HepG2 (cell line): ENCODE measurements at regions of chr11 and their contacts with region 1.

Region 1: DNA sequence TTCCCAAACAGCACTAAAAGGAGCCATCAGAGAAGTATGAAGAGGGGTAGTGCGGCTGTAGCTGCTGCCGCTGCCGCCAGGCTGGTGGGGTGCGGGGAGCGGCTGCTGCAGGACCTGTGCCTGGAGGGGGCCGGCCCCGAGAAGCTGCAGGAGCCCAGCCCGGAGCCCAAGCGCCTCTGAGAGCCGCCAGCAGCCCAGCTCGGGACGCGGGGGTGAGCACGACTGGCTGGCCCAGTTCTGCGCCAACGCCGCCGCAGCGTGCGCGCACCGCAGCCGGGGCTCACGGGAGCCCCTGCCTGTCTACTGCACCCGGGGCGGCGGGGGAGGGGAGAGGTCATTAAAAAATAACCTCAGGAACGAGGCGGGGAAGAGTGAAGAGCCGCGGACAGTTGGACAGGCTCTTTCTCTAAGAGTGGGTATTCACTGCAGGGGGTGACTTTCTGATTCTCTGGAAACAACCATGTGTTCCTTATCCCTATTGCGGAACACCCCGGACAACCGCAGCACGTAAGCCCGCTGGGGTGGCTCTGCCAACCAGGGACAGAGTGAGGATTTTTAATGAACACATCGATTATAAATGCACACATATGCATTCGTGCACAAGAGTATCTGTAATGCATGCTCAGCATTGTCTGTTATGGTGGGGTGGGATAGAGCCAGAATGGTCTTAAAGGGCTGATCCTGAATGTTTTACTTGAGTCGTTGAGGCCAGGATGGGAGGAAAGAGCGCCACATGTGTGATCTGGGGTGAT is 453 bp downstream of the GAS2 start:
- DNase-seq: peak; percentile 53
- ATAC-seq: peak; percentile 98
- H3K4me3 ChIP-seq: peak overlapping the region; percentile 74 to 90 (median 86)
- H3K27ac ChIP-seq: peak overlapping the region; percentile 87
- H3K4me1 ChIP-seq: peaks cover 58% of the 10 kb centered on the region
- H3K27me3 ChIP-seq: no peaks in the 10 kb centered on the region; a peak in 1 of 5 replicates
- CTCF ChIP-seq: 0 out of 2 replicates have a peak, but pooled peaks have one; percentile 8
- EP300 ChIP-seq: no peak; a peak in 1 of 4 replicates
- POLR2A ChIP-seq: peak; percentile 62 to 64; a peak in 3 of 4 replicates
- RAD21 ChIP-seq: peak; percentile 59

Region 2: DNA sequence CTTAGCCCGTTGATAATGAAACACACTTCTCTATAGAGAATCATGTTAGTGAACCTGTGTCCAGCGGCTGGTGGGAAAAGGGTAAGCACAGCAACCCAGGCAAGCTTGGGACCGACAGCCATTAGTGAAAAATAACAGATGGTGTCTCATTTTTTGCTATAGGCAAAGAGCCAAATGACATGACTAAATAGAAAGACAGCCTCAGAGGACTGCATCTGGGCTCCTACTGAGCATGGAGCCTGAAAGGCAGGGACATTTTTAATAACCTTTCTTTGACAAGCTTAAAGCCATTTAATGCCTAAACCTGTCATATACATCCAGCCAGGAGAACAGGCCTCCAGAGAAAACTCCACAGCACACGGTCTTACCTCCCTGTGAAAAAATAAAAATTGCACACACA is 108.2 kb before region 1 on chr11:
- CTCF ChIA-PET with region 1: no interaction called
- POLR2A ChIA-PET with region 1: no interaction called
- in situ Hi-C with region 1: no loop called
- intact Hi-C with region 1: no loop called
- DNase-seq: no peak
- ATAC-seq: no peak
- H3K4me3 ChIP-seq: no peak overlapping the region
- H3K27ac ChIP-seq: no peak overlapping the region
- H3K4me1 ChIP-seq: no peaks in the 10 kb centered on the region
- H3K27me3 ChIP-seq: no peaks in the 10 kb centered on the region; a peak in 1 of 5 replicates
- CTCF ChIP-seq: no peak
- EP300 ChIP-seq: no peak
- POLR2A ChIP-seq: no peak
- RAD21 ChIP-seq: no peak

Region 3: DNA sequence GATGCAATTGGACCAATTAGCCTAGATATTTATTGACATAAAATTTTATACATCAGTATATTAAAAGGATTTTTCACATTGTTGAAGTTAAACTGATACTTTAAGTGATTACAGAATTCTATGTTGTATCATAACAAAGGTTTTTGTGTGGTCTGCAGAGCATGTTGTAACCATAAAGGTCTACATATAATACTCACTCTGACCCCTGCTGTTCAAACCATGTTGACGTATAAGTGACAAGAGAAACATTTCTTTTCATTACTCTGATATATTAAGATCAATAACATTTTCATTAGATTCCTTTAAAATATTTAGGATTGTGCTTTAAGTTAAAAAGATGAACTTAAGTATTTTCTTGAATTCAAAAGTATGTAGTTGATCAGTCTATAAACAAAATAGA is 63.5 kb after region 1 on chr11:
- CTCF ChIA-PET with region 1: interaction called, 26 read pairs
- POLR2A ChIA-PET with region 1: no interaction called
- in situ Hi-C with region 1: loop called (anchors 5 kb)
- intact Hi-C with region 1: loop called (anchors 1 kb)
- DNase-seq: peak; percentile 59
- ATAC-seq: peak; percentile 56
- H3K4me3 ChIP-seq: no peak overlapping the region
- H3K27ac ChIP-seq: no peak overlapping the region
- H3K4me1 ChIP-seq: peaks cover 10% of the 10 kb centered on the region
- H3K27me3 ChIP-seq: no peaks in the 10 kb centered on the region
- CTCF ChIP-seq: peak; percentile 35
- EP300 ChIP-seq: no peak
- POLR2A ChIP-seq: no peak
- RAD21 ChIP-seq: peak; percentile 48

Region 4: DNA sequence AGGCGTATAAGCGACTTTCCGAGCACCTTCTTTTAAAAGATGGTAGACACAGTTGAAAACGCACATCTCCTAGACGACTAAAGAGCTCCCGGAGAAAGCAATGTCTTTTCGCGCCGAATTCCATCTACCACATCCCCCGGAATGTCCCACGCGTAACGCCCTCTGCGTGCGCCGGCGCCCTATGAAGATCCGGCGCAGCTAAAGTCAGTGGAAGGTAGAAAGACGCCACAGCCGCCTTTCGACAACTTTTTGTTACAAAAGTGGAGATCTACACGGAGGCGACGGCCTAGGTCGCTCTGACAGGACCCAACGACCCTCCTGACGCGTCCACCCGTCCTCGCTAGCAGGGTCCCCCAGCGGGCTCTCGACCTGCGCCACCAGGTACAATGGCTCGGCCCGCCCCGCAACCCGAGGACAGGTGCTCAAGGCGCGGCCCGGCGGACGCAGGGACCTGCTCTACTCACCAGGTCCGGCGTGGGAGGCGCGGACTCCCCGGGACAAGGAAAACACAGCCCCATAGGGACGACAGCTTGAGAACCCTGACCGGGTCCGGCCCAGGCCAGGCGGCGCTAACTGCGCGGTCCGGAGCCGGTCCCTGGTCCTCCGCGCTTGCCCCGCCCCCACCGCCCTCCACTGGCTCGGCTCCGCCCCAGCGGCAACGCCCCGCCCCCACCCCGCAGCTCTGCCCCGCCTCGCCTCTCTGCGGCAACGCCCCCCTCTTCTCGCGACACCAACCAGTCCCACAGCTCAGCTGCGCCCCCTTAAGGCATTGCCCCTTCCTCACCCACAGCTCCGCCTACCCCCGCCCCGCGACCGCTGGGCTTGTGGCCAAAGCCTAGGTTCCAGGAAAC is 162.6 kb after region 1 on chr11 and contains the start of gene SVIP:
- CTCF ChIA-PET with region 1: no interaction called
- POLR2A ChIA-PET with region 1: interaction called, 3 read pairs
- in situ Hi-C with region 1: no loop called
- intact Hi-C with region 1: loop called (anchors 2 kb)
- DNase-seq: peak; percentile 87
- ATAC-seq: peak; percentile 94
- H3K4me3 ChIP-seq: peak within 1 kb of the TSS; percentile 78 to 99 (median 82)
- H3K27ac ChIP-seq: peak within 1 kb of the TSS; percentile 89
- H3K4me1 ChIP-seq: peaks cover 44% of the 10 kb centered on the region
- H3K27me3 ChIP-seq: no peaks in the 10 kb centered on the region; a peak in 1 of 5 replicates
- CTCF ChIP-seq: peak; percentile 91
- EP300 ChIP-seq: peak in 1 of 2 experiments; percentile 38; a peak in 1 of 4 replicates
- POLR2A ChIP-seq: peak; percentile 84
- RAD21 ChIP-seq: no peak
- total RNA-seq, gene SVIP: 27.2 and 31.1 TPM in 2 replicates

Region 5: GRCh38 chr11:23644443-23644842 is 977.6 kb after region 1 on chr11:
- CTCF ChIA-PET with region 1: no interaction called
- POLR2A ChIA-PET with region 1: no interaction called
- in situ Hi-C with region 1: no loop called
- intact Hi-C with region 1: no loop called
- DNase-seq: no peak
- ATAC-seq: no peak
- H3K4me3 ChIP-seq: no peak overlapping the region
- H3K27ac ChIP-seq: no peak overlapping the region
- H3K4me1 ChIP-seq: no peaks in the 10 kb centered on the region
- H3K27me3 ChIP-seq: no peaks in the 10 kb centered on the region
- CTCF ChIP-seq: no peak
- EP300 ChIP-seq: no peak
- POLR2A ChIP-seq: no peak
- RAD21 ChIP-seq: no peak